Activated naive CD4-positive, alpha-beta T cell treated with anti-CD3 and anti-CD28 coated beads for 36 hours (primary cell): ENCODE measurements at regions of chr1 and their contacts with region 1.

Region 1: DNA sequence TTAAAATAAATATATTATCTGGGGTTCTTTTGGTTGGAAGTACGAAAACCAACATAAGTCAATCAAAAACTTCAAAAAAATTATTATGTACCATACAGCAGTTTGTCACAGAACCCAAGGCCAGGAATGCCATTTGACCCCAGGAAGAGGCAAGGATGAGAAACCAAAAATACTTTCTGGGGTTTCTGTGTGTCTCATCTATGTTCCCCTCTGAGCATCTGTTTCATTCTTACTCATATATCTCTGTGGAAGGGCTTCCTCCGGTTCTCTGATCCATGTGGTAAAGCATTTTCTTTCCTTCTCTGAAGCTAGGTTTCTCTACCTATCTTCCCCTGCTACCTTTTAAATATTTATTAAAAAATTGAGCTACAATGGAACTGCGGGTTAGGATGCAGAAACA is 9.8 kb upstream of the FCRL1 start:
- DNase-seq: no peak
- H3K4me3 Mint-ChIP-seq: no peak overlapping the region
- H3K27ac Mint-ChIP-seq: no peak overlapping the region
- H3K4me1 Mint-ChIP-seq: no peaks in the 10 kb centered on the region
- H3K27me3 Mint-ChIP-seq: peaks cover 4% of the 10 kb centered on the region

Region 2: GRCh38 chr1:157798211-157798610 is 31.5 kb before region 1 on chr1:
- CTCF ChIA-PET with region 1: no interaction called
- intact Hi-C with region 1: loop called (anchors 5 kb)
- DNase-seq: no peak
- H3K4me3 Mint-ChIP-seq: no peak overlapping the region
- H3K27ac Mint-ChIP-seq: no peak overlapping the region
- H3K4me1 Mint-ChIP-seq: no peaks in the 10 kb centered on the region
- H3K27me3 Mint-ChIP-seq: no peaks in the 10 kb centered on the region